A673 (cell line): ENCODE measurements at regions of chr7 and their contacts with region 1.

Region 1: DNA sequence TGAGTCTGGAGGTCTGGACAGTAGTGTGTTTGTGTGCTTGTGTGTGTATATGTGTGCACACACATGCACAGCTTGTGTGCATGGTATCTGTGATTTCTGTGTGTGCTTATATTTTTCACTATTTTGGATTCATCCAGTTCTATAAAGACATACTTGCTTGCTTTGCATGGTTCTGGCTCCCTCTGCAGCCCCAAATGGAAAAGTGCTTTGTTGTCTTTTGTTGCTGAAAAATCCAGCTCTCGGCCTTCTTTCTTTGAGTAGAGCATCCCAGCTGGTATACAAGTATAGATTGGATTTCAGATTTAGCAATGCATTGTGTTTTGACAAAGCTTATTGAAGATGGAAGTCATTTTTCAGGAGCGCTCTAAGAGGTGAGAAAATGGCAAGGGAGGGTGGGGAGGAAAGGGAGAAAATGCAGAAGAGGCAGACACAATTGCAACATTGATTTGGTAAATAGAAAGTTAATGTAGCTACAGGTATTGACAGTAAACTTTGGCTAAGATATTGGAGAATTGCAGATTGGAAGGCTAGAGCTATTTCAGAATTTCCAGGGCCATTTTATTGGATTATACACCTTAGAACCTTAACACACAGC is 333.9 kb downstream of the AUTS2 start:
- DNase-seq: peak; percentile 71
- H3K4me3 ChIP-seq: no peak overlapping the region
- H3K27ac ChIP-seq: no peak overlapping the region
- H3K4me1 ChIP-seq: no peaks in the 10 kb centered on the region
- H3K27me3 ChIP-seq: no peaks in the 10 kb centered on the region
- CTCF ChIP-seq: peak; percentile 77

Region 2: DNA sequence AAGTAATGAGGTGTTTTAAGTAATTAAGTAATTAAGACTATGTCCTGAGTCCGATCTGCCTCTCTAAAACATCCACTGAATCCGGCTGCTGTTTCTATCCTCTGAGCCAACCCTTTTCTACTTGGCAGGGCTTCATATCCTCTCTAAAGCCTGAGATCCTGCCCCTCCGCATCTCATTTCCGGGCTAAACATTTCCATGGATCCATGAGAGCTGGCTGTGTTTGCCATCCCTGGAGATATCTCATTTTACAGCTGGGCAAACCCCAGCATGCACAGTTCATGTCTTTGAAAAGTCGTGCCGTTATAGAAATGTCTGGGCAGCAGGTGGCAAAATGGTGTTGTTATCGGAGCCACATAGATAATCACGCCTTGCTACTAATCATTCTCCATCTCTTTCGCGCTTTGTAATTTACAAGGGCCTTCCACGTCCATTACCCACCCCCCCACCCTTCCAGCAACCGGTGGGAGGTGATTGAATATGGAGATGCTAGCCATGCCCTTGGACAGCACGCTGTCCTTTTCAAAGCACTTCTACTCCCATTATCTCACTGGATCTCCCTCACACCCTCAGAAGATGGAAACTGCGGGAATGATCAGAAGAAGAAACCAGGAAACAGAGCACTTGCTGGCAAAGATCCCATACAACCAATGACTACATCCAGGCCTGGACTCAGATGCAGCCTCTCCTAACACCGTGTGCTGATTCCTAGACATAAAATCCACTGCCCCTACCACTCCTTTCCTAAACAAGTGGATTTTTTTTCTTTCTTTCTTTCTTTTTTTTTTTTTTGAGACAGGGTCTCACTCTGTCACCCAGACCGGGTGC is 1746.3 kb before region 1 on chr7:
- CTCF ChIA-PET with region 1: no interaction called
- POLR2A ChIA-PET with region 1: no interaction called
- intact Hi-C with region 1: loop called (anchors 10 kb)
- DNase-seq: peak; percentile 88
- H3K4me3 ChIP-seq: no peak overlapping the region
- H3K27ac ChIP-seq: peak overlapping the region; percentile 24
- H3K4me1 ChIP-seq: peaks cover 7% of the 10 kb centered on the region
- H3K27me3 ChIP-seq: no peaks in the 10 kb centered on the region
- CTCF ChIP-seq: peak; percentile 30; the same call in 1 of the 2 replicates

Region 3: DNA sequence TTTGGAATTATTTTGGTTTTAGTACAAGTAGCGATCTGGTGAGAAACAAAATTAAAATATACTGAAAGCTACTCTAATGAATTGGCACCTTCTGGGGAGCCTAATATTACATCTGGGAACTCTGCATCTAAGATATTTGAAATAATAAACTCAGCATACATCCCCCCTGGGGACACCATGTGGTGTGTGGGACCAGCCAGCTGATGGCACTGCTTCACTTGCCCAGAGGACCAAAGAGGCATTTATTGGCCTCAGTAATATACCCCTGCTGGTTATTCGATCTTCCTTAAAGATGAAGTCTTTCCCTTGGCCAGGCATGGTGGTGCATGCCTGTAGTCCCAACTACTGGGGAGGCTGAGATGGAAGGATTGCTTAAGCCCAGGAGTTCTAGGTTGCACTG is 529.0 kb before region 1 on chr7:
- CTCF ChIA-PET with region 1: no interaction called
- POLR2A ChIA-PET with region 1: no interaction called
- intact Hi-C with region 1: loop called (anchors 2 kb)
- DNase-seq: peak; percentile 66
- H3K4me3 ChIP-seq: no peak overlapping the region
- H3K27ac ChIP-seq: no peak overlapping the region
- H3K4me1 ChIP-seq: no peaks in the 10 kb centered on the region
- H3K27me3 ChIP-seq: no peaks in the 10 kb centered on the region
- CTCF ChIP-seq: peak; percentile 53; the same call in 1 of the 2 replicates

Region 4: GRCh38 chr7:70156057-70156456 is 223.9 kb after region 1 on chr7:
- CTCF ChIA-PET with region 1: no interaction called
- POLR2A ChIA-PET with region 1: no interaction called
- intact Hi-C with region 1: loop called (anchors 2 kb)
- DNase-seq: no peak
- H3K4me3 ChIP-seq: no peak overlapping the region
- H3K27ac ChIP-seq: no peak overlapping the region
- H3K4me1 ChIP-seq: peaks cover 4% of the 10 kb centered on the region
- H3K27me3 ChIP-seq: no peaks in the 10 kb centered on the region
- CTCF ChIP-seq: no peak